ENCODE measurements at regions of chr21 and their contacts with region 1.

Region 1: GRCh38 chr21:37366482-37367316 is at the start of gene DYRK1A:
- DNase-seq: peak; percentile 91 to 95
- H3K4me3 ChIP-seq: peak within 1 kb of the TSS; percentile 78
- H3K27ac ChIP-seq: peak within 1 kb of the TSS; percentile 97
- H3K4me1 ChIP-seq: peaks cover 37% of the 10 kb centered on the region
- H3K27me3 ChIP-seq: no peaks in the 10 kb centered on the region
- CTCF ChIP-seq: no peak
- total RNA-seq, gene DYRK1A: 33.7 and 35.5 TPM in 2 replicates

Region 2: GRCh38 chr21:37224861-37225839 is 141.5 kb before region 1 on chr21:
- CTCF ChIA-PET with region 1: no interaction called
- POLR2A ChIA-PET with region 1: interaction called, 10 read pairs
- intact Hi-C with region 1: no loop called
- DNase-seq: no peak
- H3K4me3 ChIP-seq: no peak overlapping the region
- H3K27ac ChIP-seq: no peak overlapping the region
- H3K4me1 ChIP-seq: no peaks in the 10 kb centered on the region
- H3K27me3 ChIP-seq: no peaks in the 10 kb centered on the region
- CTCF ChIP-seq: no peak

Region 3: DNA sequence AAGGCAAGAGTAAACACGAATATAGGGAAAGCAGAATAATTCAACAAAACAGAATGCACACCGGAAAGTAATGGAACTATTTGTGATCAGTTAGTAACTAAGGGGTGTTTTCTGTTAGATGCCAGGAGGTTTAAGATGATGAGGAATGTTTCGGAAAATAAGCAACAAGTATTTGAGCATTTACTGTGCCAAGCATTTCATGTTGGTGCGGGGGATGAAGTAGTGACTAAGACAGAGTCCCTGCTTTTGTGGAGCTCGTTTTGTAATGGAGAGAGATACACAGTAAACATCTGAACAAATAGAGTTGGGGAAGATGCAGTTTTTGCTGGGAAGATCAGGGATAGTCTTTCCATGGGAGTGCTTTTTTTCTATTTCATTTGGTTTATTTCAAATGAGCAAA is 78.5 kb after region 1 on chr21:
- CTCF ChIA-PET with region 1: no interaction called
- POLR2A ChIA-PET with region 1: no interaction called
- intact Hi-C with region 1: no loop called
- DNase-seq: no peak
- H3K4me3 ChIP-seq: no peak overlapping the region
- H3K27ac ChIP-seq: no peak overlapping the region
- H3K4me1 ChIP-seq: peaks cover 11% of the 10 kb centered on the region
- H3K27me3 ChIP-seq: no peaks in the 10 kb centered on the region
- CTCF ChIP-seq: no peak

Region 4: GRCh38 chr21:37463083-37463801 is 96.5 kb after region 1 on chr21:
- CTCF ChIA-PET with region 1: no interaction called
- POLR2A ChIA-PET with region 1: no interaction called
- intact Hi-C with region 1: loop called (anchors 2 kb)
- DNase-seq: peak in 1 of 2 experiments; percentile 41
- H3K4me3 ChIP-seq: no peak overlapping the region
- H3K27ac ChIP-seq: 0 out of 2 replicates have a peak overlapping the region, but pooled peaks have one; percentile 37
- H3K4me1 ChIP-seq: no peaks in the 10 kb centered on the region
- H3K27me3 ChIP-seq: no peaks in the 10 kb centered on the region
- CTCF ChIP-seq: peak; percentile 77

Region 5: GRCh38 chr21:37658817-37659458 is 292.2 kb after region 1 on chr21:
- CTCF ChIA-PET with region 1: no interaction called
- POLR2A ChIA-PET with region 1: no interaction called
- intact Hi-C with region 1: loop called (anchors 5 kb)
- DNase-seq: peak; percentile 73 to 91
- H3K4me3 ChIP-seq: no peak overlapping the region
- H3K27ac ChIP-seq: peak overlapping the region; percentile 84
- H3K4me1 ChIP-seq: peaks cover 28% of the 10 kb centered on the region
- H3K27me3 ChIP-seq: no peaks in the 10 kb centered on the region
- CTCF ChIP-seq: no peak; the same call in 1 of the 2 replicates

Region 6: GRCh38 chr21:37849506-37850102 is 482.9 kb after region 1 on chr21:
- CTCF ChIA-PET with region 1: no interaction called
- POLR2A ChIA-PET with region 1: no interaction called
- intact Hi-C with region 1: no loop called
- DNase-seq: no peak
- H3K4me3 ChIP-seq: no peak overlapping the region
- H3K27ac ChIP-seq: no peak overlapping the region
- H3K4me1 ChIP-seq: no peaks in the 10 kb centered on the region
- H3K27me3 ChIP-seq: no peaks in the 10 kb centered on the region
- CTCF ChIP-seq: no peak